H1 (cell line): ENCODE measurements at regions of chr15 and their contacts with region 1.

Region 1: GRCh38 chr15:94582369-94582768 is 351.0 kb downstream of the MCTP2 start:
- DNase-seq: peak; percentile 31 to 59
- H3K4me3 ChIP-seq: no peak overlapping the region
- H3K27ac ChIP-seq: no peak overlapping the region
- H3K4me1 ChIP-seq: peaks cover 0 to 2% (median 0%) of the 10 kb centered on the region in 4 experiments; a peak in 1 of 7 replicates
- H3K27me3 ChIP-seq: no peaks in the 10 kb centered on the region
- CTCF ChIP-seq: peak; percentile 67 to 82 (median 80)
- EP300 ChIP-seq: no peak
- POLR2A ChIP-seq: no peak
- RAD21 ChIP-seq: peak; percentile 93 to 95

Region 2: GRCh38 chr15:94412979-94413746 is 169.2 kb before region 1 on chr15:
- CTCF ChIA-PET with region 1: interaction called, 14 read pairs
- POLR2A ChIA-PET with region 1: no interaction called
- DNase-seq: no peak
- H3K4me3 ChIP-seq: no peak overlapping the region
- H3K27ac ChIP-seq: no peak overlapping the region
- H3K4me1 ChIP-seq: no peaks in the 10 kb centered on the region
- H3K27me3 ChIP-seq: no peaks in the 10 kb centered on the region
- CTCF ChIP-seq: peak in 2 of 3 experiments; percentile 27 to 33; a peak in 2 of 4 replicates
- EP300 ChIP-seq: no peak
- POLR2A ChIP-seq: no peak
- RAD21 ChIP-seq: peak; percentile 61 to 64

Region 3: DNA sequence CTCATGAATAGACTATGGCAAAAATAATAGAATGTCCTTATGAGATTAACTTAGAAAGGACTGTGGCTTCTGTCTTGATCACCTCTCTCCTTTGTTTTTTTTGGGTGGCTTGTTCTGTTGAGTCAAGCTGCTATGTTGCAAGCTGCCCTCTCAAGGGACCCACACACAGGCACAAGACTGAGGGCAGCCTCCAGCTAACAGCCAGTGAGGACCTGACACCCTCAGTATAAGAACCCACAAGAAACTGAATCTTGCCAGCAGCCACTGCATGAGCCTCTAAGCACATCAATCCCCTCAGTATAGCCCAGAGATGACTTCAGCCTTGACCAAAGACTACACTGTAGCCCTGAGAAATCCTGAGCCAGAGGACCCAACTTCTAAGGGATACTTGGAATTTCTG is 10.1 kb after region 1 on chr15:
- CTCF ChIA-PET with region 1: interaction called, 21 read pairs
- POLR2A ChIA-PET with region 1: no interaction called
- DNase-seq: no peak
- H3K4me3 ChIP-seq: no peak overlapping the region
- H3K27ac ChIP-seq: no peak overlapping the region
- H3K4me1 ChIP-seq: no peaks in the 10 kb centered on the region; a peak in 1 of 7 replicates
- H3K27me3 ChIP-seq: no peaks in the 10 kb centered on the region
- CTCF ChIP-seq: no peak
- EP300 ChIP-seq: no peak
- POLR2A ChIP-seq: no peak
- RAD21 ChIP-seq: no peak